ENCODE measurements at regions of chr4 and their contacts with region 1.

Region 1: GRCh38 chr4:118058955-118059354 is 24.7 kb downstream of the NDST3 start:
- DNase-seq: no peak
- ATAC-seq: no peak
- H3K4me3 ChIP-seq: no peak overlapping the region
- H3K27ac ChIP-seq: no peak overlapping the region
- H3K4me1 ChIP-seq: no peaks in the 10 kb centered on the region
- H3K27me3 ChIP-seq: no peaks in the 10 kb centered on the region
- CTCF ChIP-seq: no peak
- EP300 ChIP-seq: no peak
- POLR2A ChIP-seq: no peak
- RAD21 ChIP-seq: no peak

Region 2: DNA sequence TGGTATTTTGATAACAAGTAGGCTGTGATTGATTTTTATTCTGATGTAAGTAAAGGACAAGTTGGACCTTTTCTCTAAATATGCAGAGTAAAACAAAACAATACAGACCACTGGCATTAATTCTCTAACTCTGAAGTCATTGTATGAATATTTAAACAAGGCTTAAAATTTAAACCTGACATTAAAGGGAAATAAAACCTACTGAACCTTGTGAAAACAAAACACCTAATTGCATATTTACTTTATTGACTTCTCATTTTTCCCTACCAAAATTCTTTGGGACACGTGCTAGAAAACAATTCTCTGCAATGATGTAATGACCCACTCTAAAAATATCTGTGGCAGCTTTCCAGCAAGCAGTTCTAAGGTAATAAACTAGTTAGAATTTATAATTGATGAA is 603.9 kb before region 1 on chr4:
- CTCF ChIA-PET with region 1: no interaction called
- POLR2A ChIA-PET with region 1: no interaction called
- in situ Hi-C with region 1: loop called (anchors 10 kb)
- intact Hi-C with region 1: no loop called
- DNase-seq: no peak
- ATAC-seq: no peak
- H3K4me3 ChIP-seq: no peak overlapping the region
- H3K27ac ChIP-seq: no peak overlapping the region
- H3K4me1 ChIP-seq: no peaks in the 10 kb centered on the region
- H3K27me3 ChIP-seq: no peaks in the 10 kb centered on the region
- CTCF ChIP-seq: no peak
- EP300 ChIP-seq: no peak
- POLR2A ChIP-seq: no peak
- RAD21 ChIP-seq: no peak

Region 3: GRCh38 chr4:117560329-117560728 is 498.6 kb before region 1 on chr4:
- CTCF ChIA-PET with region 1: no interaction called
- POLR2A ChIA-PET with region 1: no interaction called
- in situ Hi-C with region 1: no loop called
- intact Hi-C with region 1: no loop called
- DNase-seq: no peak
- ATAC-seq: no peak
- H3K4me3 ChIP-seq: no peak overlapping the region
- H3K27ac ChIP-seq: no peak overlapping the region
- H3K4me1 ChIP-seq: no peaks in the 10 kb centered on the region
- H3K27me3 ChIP-seq: no peaks in the 10 kb centered on the region
- CTCF ChIP-seq: no peak
- EP300 ChIP-seq: no peak
- POLR2A ChIP-seq: no peak
- RAD21 ChIP-seq: no peak

Region 4: DNA sequence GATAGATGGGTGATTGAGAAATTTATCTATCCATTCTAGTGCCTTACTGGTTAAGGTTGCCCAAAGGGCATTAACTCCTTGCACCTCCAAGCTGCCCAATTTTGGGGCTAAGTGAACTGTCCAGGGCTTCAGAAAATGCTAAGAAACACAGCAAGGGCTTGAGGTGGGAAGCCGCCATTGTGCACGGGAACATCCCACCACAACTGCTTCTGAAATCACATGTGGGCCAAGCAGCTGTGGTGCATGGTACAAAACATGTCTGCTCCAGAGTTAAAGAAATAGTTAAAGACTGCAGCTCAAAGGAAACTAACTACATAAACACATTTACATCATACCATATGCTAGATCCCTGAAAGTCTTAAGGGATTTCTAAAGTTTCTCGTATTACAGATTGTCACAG is 169.0 kb before region 1 on chr4:
- CTCF ChIA-PET with region 1: no interaction called
- POLR2A ChIA-PET with region 1: no interaction called
- in situ Hi-C with region 1: no loop called
- intact Hi-C with region 1: no loop called
- DNase-seq: no peak
- ATAC-seq: no peak
- H3K4me3 ChIP-seq: no peak overlapping the region
- H3K27ac ChIP-seq: no peak overlapping the region
- H3K4me1 ChIP-seq: no peaks in the 10 kb centered on the region
- H3K27me3 ChIP-seq: no peaks in the 10 kb centered on the region
- CTCF ChIP-seq: no peak
- EP300 ChIP-seq: no peak
- POLR2A ChIP-seq: no peak
- RAD21 ChIP-seq: no peak

Region 5: DNA sequence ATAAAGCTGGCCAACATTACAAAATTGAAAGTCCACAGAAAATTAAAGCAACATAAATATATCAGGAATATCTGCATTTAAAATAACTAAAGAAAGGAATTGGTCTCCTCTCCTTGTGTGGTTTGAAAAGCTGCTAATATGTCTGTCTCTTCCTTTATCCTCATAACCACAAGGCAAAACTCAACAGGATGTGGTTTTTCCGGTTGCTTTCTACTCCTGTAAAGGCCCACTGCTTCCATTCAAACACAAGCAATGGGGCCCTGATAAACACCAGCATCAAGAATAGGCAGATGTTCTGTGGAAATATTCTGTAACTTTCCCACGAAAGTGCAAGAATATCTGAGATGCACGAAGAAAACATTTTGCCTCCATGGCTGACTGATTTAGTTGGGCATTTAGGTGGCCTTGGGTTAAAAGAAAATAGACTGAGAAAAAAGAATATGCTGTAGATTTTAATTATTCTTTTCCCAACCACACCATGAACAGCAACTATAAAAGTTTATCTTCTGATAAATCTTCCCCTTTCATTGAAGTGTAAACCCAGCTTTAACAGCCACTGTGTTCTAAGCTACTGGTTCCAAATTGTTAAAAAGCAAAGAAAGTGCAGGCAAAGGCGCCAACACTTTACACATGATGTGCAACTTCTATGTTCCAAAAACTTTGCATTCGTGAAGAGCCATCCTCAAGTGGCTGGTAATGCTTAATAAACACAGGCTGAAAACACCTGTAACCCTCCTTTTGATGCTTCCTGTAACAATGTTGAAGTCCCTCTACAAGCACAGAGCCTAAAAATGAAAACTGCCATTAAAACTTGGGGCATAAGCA is 75.2 kb before region 1 on chr4:
- CTCF ChIA-PET with region 1: no interaction called
- POLR2A ChIA-PET with region 1: no interaction called
- in situ Hi-C with region 1: no loop called
- intact Hi-C with region 1: no loop called
- DNase-seq: no peak
- ATAC-seq: no peak
- H3K4me3 ChIP-seq: no peak overlapping the region
- H3K27ac ChIP-seq: no peak overlapping the region
- H3K4me1 ChIP-seq: no peaks in the 10 kb centered on the region
- H3K27me3 ChIP-seq: no peaks in the 10 kb centered on the region
- CTCF ChIP-seq: no peak
- EP300 ChIP-seq: no peak
- POLR2A ChIP-seq: no peak
- RAD21 ChIP-seq: no peak

Region 6: GRCh38 chr4:118296729-118297128 is 237.8 kb after region 1 on chr4:
- CTCF ChIA-PET with region 1: no interaction called
- POLR2A ChIA-PET with region 1: no interaction called
- in situ Hi-C with region 1: no loop called
- intact Hi-C with region 1: no loop called
- DNase-seq: no peak
- ATAC-seq: no peak
- H3K4me3 ChIP-seq: no peak overlapping the region
- H3K27ac ChIP-seq: no peak overlapping the region
- H3K4me1 ChIP-seq: no peaks in the 10 kb centered on the region
- H3K27me3 ChIP-seq: no peaks in the 10 kb centered on the region; a peak in 1 of 5 replicates
- CTCF ChIP-seq: no peak
- EP300 ChIP-seq: no peak
- POLR2A ChIP-seq: no peak
- RAD21 ChIP-seq: no peak